H1 (cell line): ENCODE measurements at regions of chr7 and their contacts with region 1.

Region 1: DNA sequence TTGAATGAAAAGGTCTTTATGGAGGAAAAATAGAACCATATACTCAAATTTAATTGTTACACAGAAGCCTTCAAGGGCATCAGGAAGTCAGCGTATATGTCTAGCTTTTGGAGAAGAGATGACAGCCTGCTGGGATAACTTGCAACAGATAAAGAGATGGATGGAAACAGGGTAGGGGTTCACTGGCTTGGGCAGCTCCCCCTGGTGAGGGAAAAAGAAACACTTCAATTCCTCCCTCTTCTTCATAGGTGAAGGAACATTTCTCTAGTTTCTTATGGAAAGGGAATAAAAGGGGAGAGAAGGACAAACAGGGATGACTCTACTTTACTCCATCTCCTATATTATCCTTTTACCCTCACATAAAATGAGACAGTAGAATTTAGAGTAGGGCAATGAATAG is 635.7 kb downstream of the PHTF2 start:
- DNase-seq: no peak
- H3K4me3 ChIP-seq: no peak overlapping the region
- H3K27ac ChIP-seq: no peak overlapping the region
- H3K4me1 ChIP-seq: peaks cover 0 to 3% (median 0%) of the 10 kb centered on the region in 4 experiments; a peak in 2 of 7 replicates
- H3K27me3 ChIP-seq: no peaks in the 10 kb centered on the region
- CTCF ChIP-seq: peak in 2 of 3 experiments; percentile 42 to 57; a peak in 3 of 4 replicates
- EP300 ChIP-seq: no peak
- POLR2A ChIP-seq: no peak
- RAD21 ChIP-seq: peak; percentile 45 to 60

Region 2: GRCh38 chr7:78377532-78377931 is 56.7 kb before region 1 on chr7:
- CTCF ChIA-PET with region 1: interaction called, 19 read pairs
- POLR2A ChIA-PET with region 1: no interaction called
- DNase-seq: no peak
- H3K4me3 ChIP-seq: no peak overlapping the region
- H3K27ac ChIP-seq: no peak overlapping the region
- H3K4me1 ChIP-seq: no peaks in the 10 kb centered on the region
- H3K27me3 ChIP-seq: no peaks in the 10 kb centered on the region
- CTCF ChIP-seq: peak in 2 of 3 experiments; percentile 18 to 32; a peak in 2 of 4 replicates
- EP300 ChIP-seq: no peak
- POLR2A ChIP-seq: no peak
- RAD21 ChIP-seq: peak; percentile 56